Posterior cingulate gyrus (tissue), 11 donors: ENCODE measurements at regions of chr11 and their contacts with region 1.

Region 1: DNA sequence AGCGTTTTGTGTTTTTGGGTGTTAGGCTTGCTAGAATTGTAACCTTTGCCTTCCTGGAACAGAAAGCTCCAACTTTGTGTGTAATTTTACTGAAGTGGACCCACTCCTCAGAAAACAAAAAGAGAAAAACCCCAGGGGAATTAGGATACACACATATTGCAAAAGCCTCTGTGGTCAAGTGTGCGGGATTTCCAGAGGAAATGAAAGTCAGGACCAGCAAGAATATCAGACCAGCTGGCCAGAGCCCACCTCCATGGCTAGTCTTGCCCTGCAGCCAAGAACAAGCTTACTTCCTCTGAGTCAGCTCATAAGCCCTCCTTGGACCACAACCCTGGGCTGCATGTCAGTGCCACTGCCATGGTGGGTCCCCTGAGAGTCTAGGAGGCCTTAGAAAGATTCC is 37.0 kb upstream of the FTH1 start:
- DNase-seq: peak in 3 of 10 donors; percentile 17 to 82 (median 31)

Region 2: GRCh38 chr11:61967116-61967923 is 37.2 kb before region 1 on chr11 and contains the start of gene FTH1:
- intact Hi-C with region 1: loop called (anchors 5 kb)
- DNase-seq: peak; percentile 90 to 99 (median 94)

Region 3: DNA sequence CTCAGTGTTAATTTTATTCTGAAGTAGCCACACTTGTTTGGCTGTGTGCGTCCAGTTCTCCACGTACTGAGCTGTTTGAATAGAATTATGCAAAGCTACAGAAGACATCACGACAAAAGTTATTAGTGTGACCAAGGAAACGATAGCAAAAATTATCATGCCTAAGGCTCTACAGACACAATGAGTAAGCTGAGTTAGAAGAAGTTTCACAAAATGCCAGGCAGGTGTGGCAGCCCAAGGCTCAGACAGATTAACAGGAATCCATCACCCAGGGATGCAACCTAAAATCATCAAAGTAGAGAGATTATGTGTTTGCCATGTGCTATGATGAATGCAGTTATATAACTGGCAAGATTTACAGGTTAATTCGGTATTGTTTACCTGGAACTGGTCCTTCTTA is 46.2 kb after region 1 on chr11:
- intact Hi-C with region 1: no loop called
- DNase-seq: peak in 1 of 10 donors; percentile 13

Region 4: DNA sequence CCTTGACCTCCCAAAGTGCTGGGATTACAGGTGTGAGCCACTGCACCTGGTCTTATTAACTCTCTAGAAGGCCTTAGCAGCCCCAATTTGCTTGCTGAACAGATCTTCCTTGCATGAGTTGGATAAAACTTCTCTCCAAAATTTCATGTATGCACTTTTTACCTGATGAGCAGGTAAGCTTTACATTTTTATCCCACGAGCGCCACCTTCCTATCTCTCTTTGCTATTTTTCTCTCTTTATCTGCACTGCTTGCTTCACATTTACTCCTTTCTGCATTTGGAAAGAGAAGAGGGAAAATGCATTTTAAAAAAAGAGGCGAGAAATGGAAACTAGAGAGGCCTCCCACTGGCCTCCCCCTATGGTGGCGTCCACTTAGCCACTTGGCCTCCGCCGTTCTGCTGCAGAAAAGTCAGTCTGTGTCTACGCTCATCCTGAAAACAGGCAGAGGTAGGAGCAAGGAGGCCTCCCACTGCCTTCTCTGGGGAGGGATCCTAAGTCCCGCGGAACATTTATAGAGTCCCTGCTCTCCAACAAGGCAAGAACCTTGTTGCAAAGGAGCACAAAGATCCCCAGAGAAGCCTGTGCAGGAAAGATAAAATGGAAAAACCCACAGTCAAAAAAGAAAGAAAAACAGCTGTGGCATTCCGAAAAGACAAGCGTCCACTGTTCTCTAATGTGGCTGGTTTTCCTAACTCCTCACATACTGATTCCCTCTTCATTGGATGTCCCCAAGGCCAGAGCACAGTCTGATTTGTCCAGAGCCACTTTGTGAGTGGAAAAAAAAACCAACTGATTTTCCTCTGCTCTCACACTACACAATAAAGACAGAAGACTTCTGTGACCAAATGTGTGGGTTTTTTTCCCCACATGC is 57.1 kb after region 1 on chr11:
- intact Hi-C with region 1: loop called (anchors 10 kb)
- DNase-seq: peak in 4 of 10 donors; percentile 27 to 70 (median 56)